ENCODE measurements at regions of chr15 and their contacts with region 1.

Region 1: DNA sequence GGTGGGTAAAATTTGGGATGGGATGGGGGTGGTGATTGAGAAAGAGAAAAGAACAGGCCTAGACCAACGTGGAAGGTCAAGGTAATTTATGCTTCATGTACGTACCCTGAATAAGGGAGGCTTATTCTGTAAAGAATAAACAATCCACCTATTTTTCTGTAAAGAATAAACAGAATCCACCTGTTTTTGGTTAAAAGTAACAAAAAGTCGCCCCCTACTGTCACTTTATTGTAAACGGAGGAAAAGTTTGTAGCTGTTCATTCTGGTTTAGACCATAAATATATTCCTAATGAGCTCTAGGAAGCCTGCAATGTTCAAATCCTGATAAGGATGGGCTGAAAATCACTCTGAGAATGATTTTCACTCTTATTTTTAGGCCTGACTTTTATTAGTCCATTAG is 23.5 kb upstream of the SQOR start:
- DNase-seq: peak; percentile 59
- H3K4me3 ChIP-seq: no peak overlapping the region
- H3K27ac ChIP-seq: no peak overlapping the region
- H3K4me1 ChIP-seq: peaks cover 17% of the 10 kb centered on the region
- CTCF ChIP-seq: peak; percentile 86

Region 2: DNA sequence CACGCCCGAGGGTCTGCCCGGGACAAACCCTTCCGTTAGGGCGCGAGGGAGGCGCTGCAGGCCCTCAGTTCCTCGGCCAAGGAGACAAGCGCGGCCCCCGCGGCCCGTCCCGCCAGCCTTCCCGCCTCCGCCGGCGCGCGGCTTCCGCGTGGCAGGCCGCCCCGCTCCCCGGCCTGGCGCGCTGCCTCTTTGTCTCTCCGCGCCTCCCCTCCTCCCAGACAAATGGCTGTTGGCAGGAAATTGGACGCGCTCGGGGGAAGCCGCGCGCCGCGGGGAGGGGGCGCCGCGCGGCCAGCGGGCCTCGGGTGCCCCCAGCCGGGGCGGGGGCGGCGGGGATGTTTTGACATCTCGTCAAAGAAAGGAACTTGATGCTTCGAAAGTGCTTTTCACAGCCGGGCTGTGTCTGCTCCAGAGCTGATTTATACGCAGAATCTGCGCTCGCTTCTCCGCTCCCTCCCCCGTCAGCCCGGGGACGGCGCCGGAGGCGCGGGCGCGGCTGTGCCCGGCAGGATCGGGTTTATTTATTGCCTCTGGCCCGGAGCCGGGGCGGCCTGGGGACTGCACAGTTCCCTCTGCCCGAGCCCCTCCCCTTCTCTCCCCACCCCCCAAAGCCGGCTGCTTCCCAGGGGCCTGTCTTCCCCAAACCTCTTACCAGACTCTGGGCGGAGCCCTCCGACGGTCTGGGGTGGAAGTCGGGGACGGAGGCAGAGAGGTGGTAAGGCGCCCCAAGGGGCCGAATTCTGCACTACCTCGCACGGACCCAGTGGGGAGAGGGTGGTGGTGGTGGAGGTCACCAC is 444.3 kb before region 1 on chr15:
- CTCF ChIA-PET with region 1: no interaction called
- POLR2A ChIA-PET with region 1: no interaction called
- intact Hi-C with region 1: loop called (anchors 10 kb)
- DNase-seq: peak; percentile 91
- H3K4me3 ChIP-seq: peak overlapping the region; percentile 73
- H3K27ac ChIP-seq: peak overlapping the region; percentile 80
- H3K4me1 ChIP-seq: peaks cover 39% of the 10 kb centered on the region
- CTCF ChIP-seq: peak; percentile 78

Region 3: DNA sequence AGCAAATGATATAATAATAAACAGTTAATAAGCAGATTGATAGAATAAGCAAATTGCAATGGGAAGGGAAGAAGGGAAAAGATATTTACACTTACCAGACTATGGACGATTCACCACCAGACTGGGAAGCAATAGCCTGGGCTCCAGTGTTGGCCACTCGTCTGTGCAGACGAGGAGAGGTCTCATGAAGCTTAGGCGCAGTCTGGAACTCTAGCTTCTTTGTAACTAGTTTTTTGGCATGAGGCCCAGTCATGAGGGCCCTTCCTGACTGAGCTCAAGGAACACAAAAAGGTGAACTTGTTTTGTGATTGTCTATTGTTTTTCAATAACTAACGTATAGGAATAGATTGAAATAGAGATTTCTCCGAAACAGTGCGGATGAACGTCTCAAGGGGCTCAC is 169.6 kb before region 1 on chr15:
- CTCF ChIA-PET with region 1: no interaction called
- POLR2A ChIA-PET with region 1: interaction called, 11 read pairs
- intact Hi-C with region 1: no loop called
- DNase-seq: no peak
- H3K4me3 ChIP-seq: no peak overlapping the region
- H3K27ac ChIP-seq: no peak overlapping the region
- H3K4me1 ChIP-seq: no peaks in the 10 kb centered on the region
- CTCF ChIP-seq: no peak

Region 4: GRCh38 chr15:45522328-45523160 is 88.8 kb before region 1 on chr15 and contains the start of gene SLC30A4:
- CTCF ChIA-PET with region 1: no interaction called
- POLR2A ChIA-PET with region 1: interaction called, 3 read pairs
- intact Hi-C with region 1: loop called (anchors 1 kb)
- DNase-seq: peak; percentile 57
- H3K4me3 ChIP-seq: peak within 1 kb of the TSS; percentile 67
- H3K27ac ChIP-seq: no peak within 1 kb of the TSS
- H3K4me1 ChIP-seq: peaks cover 15% of the 10 kb centered on the region
- CTCF ChIP-seq: peak; percentile 63
- total RNA-seq, gene SLC30A4: 0.13 TPM in 2 replicates